H1 (cell line): ENCODE measurements at regions of chr10 and their contacts with region 1.

Region 1: GRCh38 chr10:127813290-127813689 is 76.3 kb downstream of the FOXI2 start:
- DNase-seq: no peak
- H3K4me3 ChIP-seq: no peak overlapping the region
- H3K27ac ChIP-seq: no peak overlapping the region
- H3K4me1 ChIP-seq: no peaks in the 10 kb centered on the region
- H3K27me3 ChIP-seq: no peaks in the 10 kb centered on the region; a peak in 1 of 7 replicates
- CTCF ChIP-seq: peak in 2 of 3 experiments; percentile 54 to 59; a peak in 3 of 4 replicates
- EP300 ChIP-seq: no peak
- POLR2A ChIP-seq: no peak
- RAD21 ChIP-seq: peak; percentile 81 to 85

Region 2: GRCh38 chr10:127679642-127680255 is 133.5 kb before region 1 on chr10:
- CTCF ChIA-PET with region 1: interaction called, 26 read pairs
- POLR2A ChIA-PET with region 1: no interaction called
- DNase-seq: no peak
- H3K4me3 ChIP-seq: no peak overlapping the region
- H3K27ac ChIP-seq: no peak overlapping the region
- H3K4me1 ChIP-seq: no peaks in the 10 kb centered on the region
- H3K27me3 ChIP-seq: no peaks in the 10 kb centered on the region
- CTCF ChIP-seq: peak; percentile 35 to 59 (median 44); a peak in 3 of 4 replicates
- EP300 ChIP-seq: no peak
- POLR2A ChIP-seq: no peak
- RAD21 ChIP-seq: peak; percentile 57 to 61

Region 3: DNA sequence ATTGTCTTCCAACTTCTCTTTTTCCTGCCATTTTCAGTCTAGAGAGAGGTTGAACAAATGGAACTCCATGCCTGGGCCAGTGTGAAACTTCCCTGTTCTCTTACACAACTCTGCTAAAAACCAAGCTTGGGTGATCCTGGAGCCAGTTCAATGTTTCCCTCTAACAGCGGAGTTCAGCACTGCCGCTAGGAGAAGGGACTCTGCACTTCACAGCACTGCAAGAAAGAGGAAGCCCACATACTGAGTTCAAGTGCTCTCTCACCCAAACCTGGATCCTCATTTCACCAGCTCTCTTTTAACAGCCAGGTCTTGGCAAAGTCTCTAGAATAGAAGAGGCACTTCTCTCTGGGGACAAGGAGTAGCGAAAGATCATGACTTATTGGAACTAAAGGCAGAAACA is 57.5 kb before region 1 on chr10:
- CTCF ChIA-PET with region 1: interaction called, 54 read pairs
- POLR2A ChIA-PET with region 1: no interaction called
- DNase-seq: no peak
- H3K4me3 ChIP-seq: no peak overlapping the region
- H3K27ac ChIP-seq: no peak overlapping the region
- H3K4me1 ChIP-seq: no peaks in the 10 kb centered on the region
- H3K27me3 ChIP-seq: no peaks in the 10 kb centered on the region
- CTCF ChIP-seq: no peak
- EP300 ChIP-seq: no peak
- POLR2A ChIP-seq: no peak
- RAD21 ChIP-seq: peak in 1 of 2 experiments; percentile 9; a peak in 1 of 4 replicates

Region 4: DNA sequence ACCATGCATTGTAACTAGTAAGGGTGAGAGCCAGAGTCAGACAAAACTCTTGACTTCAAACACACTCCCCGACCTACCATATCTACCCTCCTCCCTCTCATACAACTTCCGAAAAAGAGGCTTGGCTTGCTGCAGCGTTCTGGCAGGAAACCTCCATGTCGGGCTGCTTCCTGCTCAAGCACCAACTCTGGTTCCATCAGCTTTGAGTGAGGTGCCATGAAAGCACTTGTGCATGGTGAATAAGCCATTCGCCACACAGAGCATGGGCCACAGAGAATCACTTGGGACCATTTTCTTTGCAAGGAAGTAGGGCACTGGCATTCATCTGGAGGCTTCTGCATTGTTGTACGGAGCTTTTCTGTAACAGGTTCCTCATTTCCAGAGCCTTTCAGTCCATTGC is 23.1 kb before region 1 on chr10:
- CTCF ChIA-PET with region 1: interaction called, 13 read pairs
- POLR2A ChIA-PET with region 1: no interaction called
- DNase-seq: no peak
- H3K4me3 ChIP-seq: no peak overlapping the region
- H3K27ac ChIP-seq: no peak overlapping the region
- H3K4me1 ChIP-seq: peaks cover 0 to 3% (median 0%) of the 10 kb centered on the region in 4 experiments; a peak in 1 of 7 replicates
- H3K27me3 ChIP-seq: no peaks in the 10 kb centered on the region
- CTCF ChIP-seq: no peak
- EP300 ChIP-seq: no peak
- POLR2A ChIP-seq: no peak
- RAD21 ChIP-seq: no peak

Region 5: GRCh38 chr10:127826154-127826725 is 12.9 kb after region 1 on chr10:
- CTCF ChIA-PET with region 1: interaction called, 21 read pairs
- POLR2A ChIA-PET with region 1: no interaction called
- DNase-seq: no peak
- H3K4me3 ChIP-seq: no peak overlapping the region
- H3K27ac ChIP-seq: no peak overlapping the region
- H3K4me1 ChIP-seq: peaks cover 0 to 3% (median 1%) of the 10 kb centered on the region in 4 experiments; a peak in 2 of 7 replicates
- H3K27me3 ChIP-seq: no peaks in the 10 kb centered on the region
- CTCF ChIP-seq: no peak
- EP300 ChIP-seq: no peak
- POLR2A ChIP-seq: no peak
- RAD21 ChIP-seq: no peak